GM13977 (cell line): ENCODE measurements at regions of chr14 and their contacts with region 1.

Region 1: GRCh38 chr14:76050797-76051392 is 65.3 kb downstream of the IFT43 start:
- DNase-seq: peak; percentile 55
- CTCF ChIP-seq: peak; percentile 83

Region 2: GRCh38 chr14:76352639-76353281 is 301.9 kb after region 1 on chr14:
- in situ Hi-C with region 1: loop called (anchors 10 kb)
- DNase-seq: peak; percentile 84
- CTCF ChIP-seq: peak; percentile 98